ENCODE measurements at regions of chr10 and their contacts with region 1.

Region 1: GRCh38 chr10:110923856-110924493 is 4.6 kb downstream of the SHOC2 start:
- DNase-seq: no peak
- ATAC-seq: no peak
- H3K4me3 ChIP-seq: no peak overlapping the region
- H3K4me3 Mint-ChIP-seq: no peak overlapping the region
- H3K27ac ChIP-seq: no peak overlapping the region
- H3K27ac Mint-ChIP-seq: no peak overlapping the region
- H3K4me1 ChIP-seq: peaks cover 6 to 22% of the 10 kb centered on the region in 2 experiments
- H3K4me1 Mint-ChIP-seq: peaks cover 59 to 64% (median 64%) of the 10 kb centered on the region in 3 donors
- H3K27me3 ChIP-seq: no peaks in the 10 kb centered on the region
- H3K27me3 Mint-ChIP-seq: no peaks in the 10 kb centered on the region

Region 2: GRCh38 chr10:110376021-110376766 is 547.8 kb before region 1 on chr10:
- CTCF ChIA-PET with region 1: no interaction called
- POLR2A ChIA-PET with region 1: no interaction called
- DNase-seq: no peak
- ATAC-seq: no peak
- H3K4me3 ChIP-seq: no peak overlapping the region
- H3K4me3 Mint-ChIP-seq: no peak overlapping the region
- H3K27ac ChIP-seq: no peak overlapping the region
- H3K27ac Mint-ChIP-seq: no peak overlapping the region
- H3K4me1 ChIP-seq: no peaks in the 10 kb centered on the region
- H3K4me1 Mint-ChIP-seq: peaks cover 0 to 2% (median 0%) of the 10 kb centered on the region in 3 donors
- H3K27me3 ChIP-seq: peaks cover 0 to 5% of the 10 kb centered on the region in 2 experiments
- H3K27me3 Mint-ChIP-seq: peaks cover 0 to 2% of the 10 kb centered on the region in 2 donors

Region 3: GRCh38 chr10:110502851-110503301 is 421.1 kb before region 1 on chr10:
- CTCF ChIA-PET with region 1: interaction called in 1 of 2 experiments, 13 read pairs
- POLR2A ChIA-PET with region 1: no interaction called
- DNase-seq: peak in 1 of 35 experiments; percentile 29
- ATAC-seq: peak; percentile 2 to 22 (median 8)
- H3K4me3 ChIP-seq: peak overlapping the region in 1 of 2 donors; percentile 6
- H3K4me3 Mint-ChIP-seq: peak overlapping the region; percentile 63 to 92 (median 73)
- H3K27ac ChIP-seq: peak overlapping the region; percentile 96
- H3K27ac Mint-ChIP-seq: peak overlapping the region; percentile 86 to 97
- H3K4me1 ChIP-seq: peaks cover 16 to 79% of the 10 kb centered on the region in 2 experiments
- H3K4me1 Mint-ChIP-seq: peaks cover 72 to 86% (median 74%) of the 10 kb centered on the region in 3 donors
- H3K27me3 ChIP-seq: peaks cover 0 to 4% of the 10 kb centered on the region in 2 experiments
- H3K27me3 Mint-ChIP-seq: no peaks in the 10 kb centered on the region

Region 4: DNA sequence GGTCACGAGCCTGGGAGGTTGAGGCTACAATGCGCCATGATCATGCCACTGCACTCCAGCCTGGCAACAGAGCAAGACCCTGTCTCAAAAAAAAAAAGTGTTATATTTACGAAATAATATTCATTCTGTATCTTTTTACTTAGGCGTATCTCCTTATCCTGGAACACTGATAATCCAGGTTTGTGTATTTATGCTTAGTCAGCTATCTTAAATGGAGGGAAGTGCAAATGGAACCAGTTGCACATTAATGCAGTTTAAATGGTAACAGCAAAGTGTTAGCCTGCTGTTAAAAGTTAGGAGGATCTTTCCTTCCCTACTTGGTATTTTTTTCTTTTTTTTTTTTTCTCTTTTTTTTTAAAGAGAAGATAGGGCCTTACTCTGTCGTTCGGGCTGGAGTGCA is 315.9 kb before region 1 on chr10:
- CTCF ChIA-PET with region 1: interaction called in 1 of 2 experiments, 14 read pairs
- POLR2A ChIA-PET with region 1: no interaction called
- DNase-seq: no peak
- ATAC-seq: no peak
- H3K4me3 ChIP-seq: no peak overlapping the region
- H3K4me3 Mint-ChIP-seq: no peak overlapping the region
- H3K27ac ChIP-seq: no peak overlapping the region
- H3K27ac Mint-ChIP-seq: no peak overlapping the region
- H3K4me1 ChIP-seq: peaks cover 2 to 4% of the 10 kb centered on the region in 2 experiments
- H3K4me1 Mint-ChIP-seq: peaks cover 4 to 14% (median 8%) of the 10 kb centered on the region in 3 donors
- H3K27me3 ChIP-seq: no peaks in the 10 kb centered on the region
- H3K27me3 Mint-ChIP-seq: no peaks in the 10 kb centered on the region